ENCODE measurements at regions of chr5 and their contacts with region 1.

Region 1: GRCh38 chr5:78547731-78548615 is 100.6 kb downstream of the LHFPL2 start:
- DNase-seq: peak; percentile 84 to 97
- H3K4me3 ChIP-seq: peak overlapping the region in 1 of 2 donors; percentile 22
- H3K27ac ChIP-seq: peak overlapping the region; percentile 94
- H3K4me1 ChIP-seq: peaks cover 12 to 34% of the 10 kb centered on the region in 2 donors
- H3K27me3 ChIP-seq: no peaks in the 10 kb centered on the region
- CTCF ChIP-seq: no peak

Region 2: DNA sequence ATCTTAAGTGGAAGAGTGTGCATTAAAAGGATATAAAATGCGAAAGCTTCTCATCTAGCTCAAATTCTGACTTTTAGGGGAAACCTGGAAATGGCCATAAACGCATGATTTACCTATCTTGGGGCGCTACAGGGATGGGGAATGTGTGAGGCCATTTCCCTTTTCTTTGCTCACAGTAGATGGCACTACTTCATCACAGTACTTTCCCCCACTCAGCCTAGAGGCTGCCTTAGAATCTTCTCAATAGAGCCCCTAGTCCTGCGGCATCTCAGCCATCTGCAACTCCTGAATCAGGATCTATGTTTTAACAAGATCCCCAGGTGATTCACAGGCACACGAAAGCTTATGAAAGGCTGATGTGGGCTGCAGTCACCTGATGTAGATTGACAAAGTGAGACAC is 10.2 kb before region 1 on chr5:
- intact Hi-C with region 1: loop called (anchors 1 kb)
- DNase-seq: peak in 1 of 2 donors; percentile 63
- H3K4me3 ChIP-seq: no peak overlapping the region
- H3K27ac ChIP-seq: no peak overlapping the region
- H3K4me1 ChIP-seq: peaks cover 10 to 37% of the 10 kb centered on the region in 2 donors
- H3K27me3 ChIP-seq: no peaks in the 10 kb centered on the region
- CTCF ChIP-seq: peak; percentile 40 to 64 (median 44)

Region 3: DNA sequence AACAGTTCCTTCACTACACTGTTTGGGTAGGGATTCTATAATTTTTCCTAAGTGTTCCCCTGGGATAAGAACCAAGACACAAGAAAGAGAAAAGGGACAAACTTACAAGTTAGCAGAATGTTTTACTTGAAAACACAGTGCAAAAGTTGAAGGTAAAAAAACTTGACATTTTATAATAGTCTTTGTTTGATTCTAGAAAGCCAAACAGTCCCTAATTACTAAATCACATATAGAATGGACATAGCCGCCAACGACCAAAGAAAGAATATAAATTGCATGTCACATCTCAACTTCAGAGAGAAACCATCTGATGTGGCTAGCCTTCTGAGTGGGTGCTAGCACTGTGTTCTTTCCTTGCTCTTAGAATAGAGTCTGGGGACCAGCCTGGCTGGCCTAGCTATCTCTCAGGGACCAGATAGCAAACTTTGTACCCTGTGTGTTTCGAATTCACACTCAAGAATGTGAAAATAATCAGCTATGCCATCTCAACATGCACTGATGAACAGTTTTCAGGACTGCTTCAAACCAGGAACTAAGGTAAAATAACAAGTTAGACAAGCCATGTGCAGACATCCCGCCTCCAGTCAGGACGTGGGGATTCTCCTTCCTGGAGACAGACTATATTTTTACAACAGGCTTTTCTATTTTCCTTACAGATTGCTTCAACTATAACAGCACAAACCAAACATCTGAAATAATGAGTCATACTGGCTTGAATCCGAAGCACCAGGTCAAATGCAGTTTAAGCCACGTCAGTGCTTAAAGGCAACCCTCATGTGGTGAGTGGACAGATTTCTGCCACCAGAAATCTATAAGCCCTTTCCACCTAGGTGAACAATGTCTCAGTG is 46.9 kb after region 1 on chr5:
- intact Hi-C with region 1: loop called (anchors 2 kb)
- DNase-seq: peak in 1 of 2 donors; percentile 84
- H3K4me3 ChIP-seq: no peak overlapping the region
- H3K27ac ChIP-seq: peak overlapping the region; percentile 66 to 74
- H3K4me1 ChIP-seq: peaks cover 14 to 47% of the 10 kb centered on the region in 2 donors
- H3K27me3 ChIP-seq: no peaks in the 10 kb centered on the region
- CTCF ChIP-seq: no peak

Region 4: GRCh38 chr5:78648359-78649210 is 100.6 kb after region 1 on chr5 and contains the start of gene LHFPL2:
- intact Hi-C with region 1: loop called (anchors 2 kb)
- DNase-seq: peak; percentile 39 to 86
- H3K4me3 ChIP-seq: peak within 1 kb of the TSS; percentile 76 to 94
- H3K27ac ChIP-seq: peak within 1 kb of the TSS; percentile 98 to 99
- H3K4me1 ChIP-seq: peaks cover 4 to 35% of the 10 kb centered on the region in 2 donors
- H3K27me3 ChIP-seq: no peaks in the 10 kb centered on the region
- CTCF ChIP-seq: no peak
- total RNA-seq, gene LHFPL2: 9.7 TPM

Region 5: GRCh38 chr5:78771260-78772205 is 223.6 kb after region 1 on chr5:
- intact Hi-C with region 1: no loop called
- DNase-seq: no peak
- H3K4me3 ChIP-seq: no peak overlapping the region
- H3K27ac ChIP-seq: no peak overlapping the region
- H3K4me1 ChIP-seq: no peaks in the 10 kb centered on the region
- H3K27me3 ChIP-seq: no peaks in the 10 kb centered on the region
- CTCF ChIP-seq: no peak

Region 6: DNA sequence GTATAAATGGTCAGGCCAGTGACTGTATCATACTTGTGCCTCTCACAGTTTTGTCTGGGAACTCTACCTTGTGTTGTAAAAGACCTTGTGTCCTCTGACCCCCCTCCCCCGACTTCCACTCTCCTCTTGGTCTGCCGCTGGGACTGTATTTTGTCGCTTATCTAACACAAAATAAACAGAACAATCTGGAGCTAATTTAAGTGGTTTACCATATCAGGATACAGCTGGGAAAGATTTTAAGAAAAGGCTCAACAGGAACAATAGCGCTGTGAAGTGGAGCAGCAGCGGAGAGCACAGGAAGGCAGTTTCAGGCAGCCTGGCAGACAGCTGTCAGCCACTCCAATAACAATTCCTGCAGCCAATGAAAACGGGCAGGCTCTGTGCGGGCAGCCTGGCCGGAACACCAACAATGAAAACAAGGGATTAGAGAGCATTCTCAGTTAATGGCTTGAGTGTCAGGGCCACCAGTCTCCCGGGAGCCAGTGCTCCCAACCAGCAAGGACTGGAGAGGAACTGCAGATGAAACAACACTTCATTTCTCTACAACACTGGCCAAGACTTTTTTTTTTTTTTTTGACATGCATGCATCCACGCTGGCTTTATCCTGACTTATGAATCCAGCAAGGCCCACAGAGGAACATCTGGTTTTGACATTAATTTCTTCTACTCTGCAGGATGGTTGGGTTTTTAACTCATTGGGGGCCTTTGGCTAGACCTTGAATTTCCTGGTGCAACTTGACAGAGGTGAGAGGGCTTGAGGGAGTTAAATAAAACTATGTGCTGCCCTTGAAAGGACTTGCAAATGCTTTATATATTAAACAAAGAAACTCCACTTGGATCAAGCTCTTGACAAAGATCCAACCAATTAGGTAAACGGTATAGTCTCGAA is 360.4 kb after region 1 on chr5:
- intact Hi-C with region 1: loop called (anchors 5 kb)
- DNase-seq: peak in 1 of 2 donors; percentile 67
- H3K4me3 ChIP-seq: peak overlapping the region; percentile 25 to 32
- H3K27ac ChIP-seq: peak overlapping the region; percentile 67 to 87
- H3K4me1 ChIP-seq: peaks cover 4 to 15% of the 10 kb centered on the region in 2 donors
- H3K27me3 ChIP-seq: no peaks in the 10 kb centered on the region
- CTCF ChIP-seq: no peak

Measured in ascending aorta (tissue), 2 donors.